ENCODE measurements at regions of chr11 and their contacts with region 1.

Region 1: GRCh38 chr11:112113539-112114457 is 27.1 kb downstream of the SDHD start:
- DNase-seq: peak in 2 of 5 donors; percentile 33 to 41
- H3K4me3 ChIP-seq: no peak overlapping the region
- H3K4me3 Mint-ChIP-seq: no peak overlapping the region
- H3K27ac ChIP-seq: no peak overlapping the region
- H3K27ac Mint-ChIP-seq: no peak overlapping the region
- H3K4me1 ChIP-seq: no peaks in the 10 kb centered on the region
- H3K4me1 Mint-ChIP-seq: peaks cover 3 to 6% (median 6%) of the 10 kb centered on the region in 3 donors
- H3K27me3 ChIP-seq: no peaks in the 10 kb centered on the region
- H3K27me3 Mint-ChIP-seq: peaks cover 0 to 3% of the 10 kb centered on the region in 2 donors

Region 2: GRCh38 chr11:111992206-111992855 is 121.5 kb before region 1 on chr11:
- CTCF ChIA-PET with region 1: no interaction called
- POLR2A ChIA-PET with region 1: no interaction called
- DNase-seq: no peak
- H3K4me3 ChIP-seq: no peak overlapping the region
- H3K4me3 Mint-ChIP-seq: no peak overlapping the region
- H3K27ac ChIP-seq: no peak overlapping the region
- H3K27ac Mint-ChIP-seq: no peak overlapping the region
- H3K4me1 ChIP-seq: no peaks in the 10 kb centered on the region
- H3K4me1 Mint-ChIP-seq: no peaks in the 10 kb centered on the region
- H3K27me3 ChIP-seq: no peaks in the 10 kb centered on the region
- H3K27me3 Mint-ChIP-seq: no peaks in the 10 kb centered on the region

Region 3: DNA sequence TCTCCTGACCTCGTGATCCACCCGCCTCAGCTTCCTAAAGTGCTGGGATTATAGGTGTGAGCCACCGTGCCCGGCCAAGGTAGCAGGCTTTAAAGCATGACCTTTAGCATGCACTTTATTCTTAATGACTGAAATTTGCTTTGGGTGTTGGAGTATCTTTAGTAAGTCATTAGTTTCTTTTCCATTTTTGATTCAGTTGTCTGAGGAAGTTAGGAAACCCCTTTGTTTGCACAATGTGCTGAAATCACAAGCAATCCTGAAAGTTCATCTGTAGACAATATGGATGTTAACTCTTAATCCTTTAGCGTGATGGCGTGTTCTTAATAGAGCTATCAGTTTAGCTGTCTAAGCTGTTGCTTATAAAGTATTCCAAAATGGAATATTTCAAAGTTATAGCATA is 10.4 kb before region 1 on chr11:
- CTCF ChIA-PET with region 1: interaction called, 15 read pairs
- POLR2A ChIA-PET with region 1: no interaction called
- DNase-seq: no peak
- H3K4me3 ChIP-seq: no peak overlapping the region
- H3K4me3 Mint-ChIP-seq: no peak overlapping the region
- H3K27ac ChIP-seq: no peak overlapping the region
- H3K27ac Mint-ChIP-seq: no peak overlapping the region
- H3K4me1 ChIP-seq: no peaks in the 10 kb centered on the region
- H3K4me1 Mint-ChIP-seq: no peaks in the 10 kb centered on the region
- H3K27me3 ChIP-seq: no peaks in the 10 kb centered on the region
- H3K27me3 Mint-ChIP-seq: no peaks in the 10 kb centered on the region

Measured in CD8-positive, alpha-beta memory T cell (primary cell).